ENCODE measurements at regions of chr15 and their contacts with region 1.

Region 1: DNA sequence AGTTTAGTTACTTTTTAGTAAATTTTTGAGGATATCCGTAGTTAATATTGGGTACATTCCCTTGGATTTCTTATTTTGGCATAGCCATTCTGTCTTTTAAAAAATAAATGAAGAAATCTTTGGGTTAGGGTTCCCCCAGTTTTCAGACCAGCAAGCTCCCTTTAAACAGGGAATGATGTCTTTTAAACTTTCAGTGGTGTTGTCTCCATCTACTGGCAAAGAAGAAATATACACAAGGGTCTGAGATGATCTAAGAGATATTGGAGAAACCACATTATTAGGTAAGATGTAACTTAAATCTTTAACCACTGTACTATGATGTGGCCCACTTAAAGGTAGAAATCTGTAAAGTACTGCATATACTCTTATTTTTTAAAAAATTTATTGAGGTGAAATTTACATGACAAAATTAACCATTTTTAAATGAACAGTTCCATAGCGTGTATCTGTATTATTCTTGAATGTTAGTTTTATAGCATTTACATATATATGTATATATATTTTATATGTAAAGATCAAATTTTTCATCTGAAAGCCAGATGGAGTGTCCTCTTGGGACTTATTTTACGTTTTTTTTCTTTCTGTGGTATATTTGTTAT is 35.1 kb upstream of the EIF3J start:
- DNase-seq: peak; percentile 27
- ATAC-seq: peak; percentile 65
- H3K4me3 ChIP-seq: no peak overlapping the region
- H3K27ac ChIP-seq: no peak overlapping the region
- H3K4me1 ChIP-seq: no peaks in the 10 kb centered on the region
- H3K27me3 ChIP-seq: no peaks in the 10 kb centered on the region
- CTCF ChIP-seq: peak; percentile 55
- EP300 ChIP-seq: no peak
- POLR2A ChIP-seq: no peak
- RAD21 ChIP-seq: no peak

Region 2: DNA sequence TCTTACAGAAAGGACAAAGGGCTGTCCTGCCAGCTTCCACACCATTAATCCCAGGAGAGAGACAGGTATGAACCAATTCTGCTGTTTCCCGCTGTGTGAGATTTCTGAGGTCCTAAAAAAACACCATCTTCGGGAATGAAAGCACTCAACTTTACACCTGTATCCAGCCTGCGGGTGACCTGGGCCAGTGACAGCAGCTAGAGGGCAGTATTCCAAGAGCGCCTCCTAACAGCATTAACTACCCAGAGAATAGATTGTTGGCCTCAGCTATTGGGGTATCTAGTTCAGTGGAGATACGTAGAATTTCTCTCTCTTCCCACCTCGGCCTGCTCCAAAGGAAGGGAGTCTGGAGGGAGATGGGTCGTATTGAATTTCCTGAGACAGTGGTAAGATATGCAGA is 619.9 kb before region 1 on chr15:
- CTCF ChIA-PET with region 1: no interaction called
- POLR2A ChIA-PET with region 1: no interaction called
- in situ Hi-C with region 1: loop called (anchors 25 kb)
- intact Hi-C with region 1: no loop called
- DNase-seq: no peak
- ATAC-seq: peak; percentile 82
- H3K4me3 ChIP-seq: no peak overlapping the region
- H3K27ac ChIP-seq: no peak overlapping the region
- H3K4me1 ChIP-seq: no peaks in the 10 kb centered on the region
- H3K27me3 ChIP-seq: no peaks in the 10 kb centered on the region
- CTCF ChIP-seq: peak; percentile 53
- EP300 ChIP-seq: no peak
- POLR2A ChIP-seq: no peak
- RAD21 ChIP-seq: no peak

Region 3: GRCh38 chr15:43903864-43904290 is 598.0 kb before region 1 on chr15:
- CTCF ChIA-PET with region 1: interaction called, 3 read pairs
- POLR2A ChIA-PET with region 1: no interaction called
- in situ Hi-C with region 1: loop called (anchors 25 kb)
- intact Hi-C with region 1: loop called (anchors 5 kb)
- DNase-seq: peak; percentile 66
- ATAC-seq: peak; percentile 91
- H3K4me3 ChIP-seq: no peak overlapping the region
- H3K27ac ChIP-seq: no peak overlapping the region
- H3K4me1 ChIP-seq: peaks cover 23% of the 10 kb centered on the region
- H3K27me3 ChIP-seq: no peaks in the 10 kb centered on the region
- CTCF ChIP-seq: peak; percentile 91
- EP300 ChIP-seq: no peak
- POLR2A ChIP-seq: no peak
- RAD21 ChIP-seq: peak; percentile 80

Region 4: GRCh38 chr15:44130778-44131177 is 371.1 kb before region 1 on chr15:
- CTCF ChIA-PET with region 1: no interaction called
- POLR2A ChIA-PET with region 1: no interaction called
- in situ Hi-C with region 1: no loop called
- intact Hi-C with region 1: no loop called
- DNase-seq: no peak
- ATAC-seq: no peak
- H3K4me3 ChIP-seq: no peak overlapping the region
- H3K27ac ChIP-seq: no peak overlapping the region
- H3K4me1 ChIP-seq: no peaks in the 10 kb centered on the region
- H3K27me3 ChIP-seq: no peaks in the 10 kb centered on the region
- CTCF ChIP-seq: no peak
- EP300 ChIP-seq: no peak
- POLR2A ChIP-seq: no peak
- RAD21 ChIP-seq: no peak

Region 5: DNA sequence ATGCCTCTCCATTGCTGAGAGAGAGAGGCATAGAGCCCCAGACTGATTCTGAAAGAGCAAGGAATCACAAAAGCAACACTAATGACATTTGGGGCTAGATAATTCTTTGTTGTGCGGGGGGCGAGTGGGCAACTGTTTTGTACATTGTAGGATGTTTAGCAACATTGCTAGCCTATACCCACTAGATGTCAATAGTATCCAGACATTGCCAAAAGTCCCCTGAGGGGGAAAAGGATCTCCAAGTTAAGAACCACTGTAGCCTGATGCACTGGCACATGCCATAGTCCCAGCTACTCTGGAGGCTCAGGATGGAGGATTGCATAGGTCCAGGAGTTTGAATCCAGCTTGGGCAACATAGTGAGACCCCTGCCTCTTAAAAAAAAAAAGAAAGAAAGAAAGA is 236.1 kb before region 1 on chr15:
- CTCF ChIA-PET with region 1: no interaction called
- POLR2A ChIA-PET with region 1: no interaction called
- in situ Hi-C with region 1: no loop called
- intact Hi-C with region 1: loop called (anchors 10 kb)
- DNase-seq: no peak
- ATAC-seq: no peak
- H3K4me3 ChIP-seq: no peak overlapping the region
- H3K27ac ChIP-seq: no peak overlapping the region
- H3K4me1 ChIP-seq: no peaks in the 10 kb centered on the region
- H3K27me3 ChIP-seq: peaks cover 0 to 14% of the 10 kb centered on the region in 2 experiments; a peak in 3 of 5 replicates
- CTCF ChIP-seq: peak; percentile 33; the same call in 1 of the 2 replicates
- EP300 ChIP-seq: no peak
- POLR2A ChIP-seq: no peak
- RAD21 ChIP-seq: no peak

Region 6: GRCh38 chr15:44286814-44287452 is 214.9 kb before region 1 on chr15:
- CTCF ChIA-PET with region 1: no interaction called
- POLR2A ChIA-PET with region 1: no interaction called
- in situ Hi-C with region 1: loop called (anchors 10 kb)
- intact Hi-C with region 1: no loop called
- DNase-seq: no peak
- ATAC-seq: no peak
- H3K4me3 ChIP-seq: peak overlapping the region in 1 of 3 experiments; percentile 94; a peak in 1 of 6 replicates
- H3K27ac ChIP-seq: no peak overlapping the region
- H3K4me1 ChIP-seq: peaks cover 28% of the 10 kb centered on the region
- H3K27me3 ChIP-seq: no peaks in the 10 kb centered on the region; a peak in 1 of 5 replicates
- CTCF ChIP-seq: no peak
- EP300 ChIP-seq: no peak
- POLR2A ChIP-seq: no peak
- RAD21 ChIP-seq: no peak

Region 7: GRCh38 chr15:44385344-44385942 is 116.4 kb before region 1 on chr15:
- CTCF ChIA-PET with region 1: no interaction called
- POLR2A ChIA-PET with region 1: no interaction called
- in situ Hi-C with region 1: no loop called
- intact Hi-C with region 1: no loop called
- DNase-seq: no peak
- ATAC-seq: no peak
- H3K4me3 ChIP-seq: no peak overlapping the region
- H3K27ac ChIP-seq: no peak overlapping the region
- H3K4me1 ChIP-seq: 0 out of 2 replicates have a peak, but pooled peaks cover 5% of the 10 kb centered on the region
- H3K27me3 ChIP-seq: no peaks in the 10 kb centered on the region
- CTCF ChIP-seq: no peak
- EP300 ChIP-seq: no peak
- POLR2A ChIP-seq: no peak
- RAD21 ChIP-seq: no peak

Region 8: DNA sequence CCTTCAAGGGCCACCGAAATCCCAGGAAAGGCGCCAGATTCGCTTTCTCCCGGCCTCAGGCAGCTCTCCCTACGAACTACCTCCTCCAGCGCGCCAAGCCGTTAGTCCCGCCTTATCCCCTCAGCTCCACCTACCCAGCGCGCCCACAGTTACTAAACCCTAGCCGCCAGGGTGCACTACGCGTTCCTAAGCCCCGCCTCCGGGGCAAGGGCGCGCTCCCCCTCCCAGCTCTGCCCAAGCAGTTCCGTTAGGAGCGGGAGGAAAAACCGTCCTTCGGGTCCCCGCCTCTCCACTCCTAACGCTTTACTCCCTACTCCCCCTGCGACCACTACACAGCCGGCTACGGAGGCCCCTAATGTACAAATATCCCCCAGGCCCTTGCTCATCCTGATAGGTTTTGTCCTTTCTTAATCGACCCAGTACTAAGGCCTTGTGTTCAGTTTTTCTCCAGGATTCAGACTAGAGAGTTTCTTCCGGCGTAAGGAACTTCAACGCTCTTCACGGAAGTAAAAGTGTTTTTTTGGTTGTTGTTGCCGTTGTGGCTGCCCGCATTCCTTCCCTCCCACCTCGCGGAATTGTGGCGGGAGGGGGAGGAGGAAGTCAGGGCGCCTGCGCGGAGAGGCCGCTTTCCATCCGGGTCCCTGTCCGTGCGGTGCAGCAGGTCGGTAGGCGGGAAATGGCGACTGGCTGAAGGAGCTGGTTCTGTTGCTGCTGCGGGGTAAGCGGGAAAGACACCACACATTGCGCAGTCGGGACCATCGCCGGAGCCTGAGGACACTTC is 74.7 kb before region 1 on chr15 and contains the start of gene CTDSPL2:
- CTCF ChIA-PET with region 1: interaction called, 3 read pairs
- POLR2A ChIA-PET with region 1: interaction called, 5 read pairs
- in situ Hi-C with region 1: no loop called
- intact Hi-C with region 1: loop called (anchors 5 kb)
- DNase-seq: peak; percentile 96
- ATAC-seq: peak; percentile 97
- H3K4me3 ChIP-seq: peak within 1 kb of the TSS; percentile 81 to 93 (median 91)
- H3K27ac ChIP-seq: peak within 1 kb of the TSS; percentile 99
- H3K4me1 ChIP-seq: peaks cover 30% of the 10 kb centered on the region
- H3K27me3 ChIP-seq: no peaks in the 10 kb centered on the region; a peak in 2 of 5 replicates
- CTCF ChIP-seq: peak; percentile 72
- EP300 ChIP-seq: 0 out of 4 replicates have a peak, but pooled peaks of 1 of the 2 experiments have one; percentile 24
- POLR2A ChIP-seq: peak; percentile 90 to 94
- RAD21 ChIP-seq: no peak
- total RNA-seq, gene CTDSPL2: 56.2 and 95.2 TPM in 2 replicates

Region 9: GRCh38 chr15:44570361-44570760 is 68.5 kb after region 1 on chr15:
- CTCF ChIA-PET with region 1: no interaction called
- POLR2A ChIA-PET with region 1: no interaction called
- in situ Hi-C with region 1: no loop called
- intact Hi-C with region 1: no loop called
- DNase-seq: no peak
- ATAC-seq: peak; percentile 26
- H3K4me3 ChIP-seq: no peak overlapping the region
- H3K27ac ChIP-seq: no peak overlapping the region
- H3K4me1 ChIP-seq: no peaks in the 10 kb centered on the region
- H3K27me3 ChIP-seq: no peaks in the 10 kb centered on the region
- CTCF ChIP-seq: no peak
- EP300 ChIP-seq: no peak
- POLR2A ChIP-seq: no peak
- RAD21 ChIP-seq: no peak

Measured in HepG2 (cell line).